Left ventricle myocardium inferior (tissue), 1 donor: ENCODE measurements at regions of chr3 and their contacts with region 1.

Region 1: DNA sequence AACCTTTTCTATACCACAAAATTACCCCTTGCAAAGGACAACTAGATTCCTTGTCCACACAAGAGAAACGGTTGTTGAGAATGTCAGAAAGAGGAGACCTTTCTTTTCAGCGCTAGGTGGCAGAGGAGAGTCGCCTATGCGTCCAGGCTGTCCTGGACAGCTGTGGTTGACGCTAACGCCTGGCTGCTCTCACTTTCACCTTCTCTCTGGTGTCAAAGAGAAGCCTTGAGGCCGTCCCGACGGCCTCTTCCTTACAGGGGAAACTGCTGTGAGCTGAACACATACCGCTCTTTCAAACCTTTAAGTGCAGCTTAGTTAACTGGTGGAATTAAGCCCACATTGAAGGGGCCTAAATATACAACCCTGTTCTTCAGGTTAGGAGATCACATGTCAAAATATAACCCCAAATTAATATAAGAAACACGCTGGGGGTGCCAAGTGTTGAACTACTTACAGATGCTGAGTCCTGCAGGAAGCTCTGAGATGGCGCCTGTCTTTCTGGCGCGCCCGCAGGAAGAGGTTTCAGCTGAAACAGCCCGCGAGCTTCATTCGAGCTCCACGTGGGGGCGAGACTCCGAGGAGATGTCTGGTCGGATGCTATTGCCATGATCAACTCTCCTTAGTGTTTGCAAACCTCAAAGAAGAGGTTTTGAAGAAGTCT is 26.1 kb upstream of the KBTBD8 start:
- DNase-seq: peak; percentile 52
- H3K4me3 ChIP-seq: peak overlapping the region; percentile 59
- H3K27ac ChIP-seq: peak overlapping the region; percentile 54
- H3K4me1 ChIP-seq: peaks cover 12% of the 10 kb centered on the region
- H3K27me3 ChIP-seq: peaks cover 14% of the 10 kb centered on the region
- CTCF ChIP-seq: peak; percentile 89

Region 2: DNA sequence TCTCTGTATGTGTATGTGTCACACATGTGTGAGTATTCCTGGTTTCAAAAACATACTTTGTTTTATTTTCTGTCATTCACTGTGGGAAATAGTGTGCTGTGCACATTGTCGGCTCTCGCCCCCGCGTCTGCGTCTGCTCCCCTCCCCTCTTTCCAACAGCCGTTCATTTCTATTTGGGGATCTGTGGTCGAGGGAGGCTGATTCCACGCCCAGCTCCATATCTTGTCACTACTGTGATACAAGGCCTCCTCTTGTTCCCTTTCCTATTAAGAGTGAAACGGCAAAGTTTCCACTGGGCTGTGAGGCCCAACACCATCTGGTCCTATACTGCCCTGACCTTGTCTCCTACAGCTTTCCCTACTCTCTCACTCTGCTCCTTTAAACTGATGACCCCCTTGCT is 298.7 kb before region 1 on chr3:
- intact Hi-C with region 1: no loop called
- DNase-seq: no peak
- H3K4me3 ChIP-seq: no peak overlapping the region
- H3K27ac ChIP-seq: no peak overlapping the region
- H3K4me1 ChIP-seq: peaks cover 23% of the 10 kb centered on the region
- H3K27me3 ChIP-seq: no peaks in the 10 kb centered on the region
- CTCF ChIP-seq: no peak

Region 3: GRCh38 chr3:67037615-67038014 is 65.6 kb after region 1 on chr3:
- intact Hi-C with region 1: loop called (anchors 5 kb)
- DNase-seq: no peak
- H3K4me3 ChIP-seq: no peak overlapping the region
- H3K27ac ChIP-seq: no peak overlapping the region
- H3K4me1 ChIP-seq: no peaks in the 10 kb centered on the region
- H3K27me3 ChIP-seq: no peaks in the 10 kb centered on the region
- CTCF ChIP-seq: peak; percentile 49

Region 4: DNA sequence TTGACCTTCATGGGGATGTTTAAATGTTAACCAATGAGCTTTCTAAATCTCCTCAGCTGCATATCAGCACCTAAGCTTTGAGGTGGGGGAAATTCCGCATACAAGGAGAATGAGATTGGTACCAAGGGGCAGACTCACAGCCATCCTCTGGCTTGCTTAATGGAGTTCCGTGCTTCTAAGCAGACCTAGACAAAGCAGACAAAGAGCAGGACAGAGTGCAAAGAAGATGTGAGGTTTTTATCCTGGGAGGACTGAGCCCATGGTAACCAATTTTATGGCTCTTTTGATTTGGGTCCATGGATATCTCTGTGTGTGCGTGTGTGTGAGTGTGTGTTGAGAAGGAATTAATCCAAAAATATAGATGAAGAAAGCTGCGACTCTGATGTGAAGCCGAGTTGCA is 1952.9 kb after region 1 on chr3:
- intact Hi-C with region 1: no loop called
- DNase-seq: no peak
- H3K4me3 ChIP-seq: no peak overlapping the region
- H3K27ac ChIP-seq: no peak overlapping the region
- H3K4me1 ChIP-seq: no peaks in the 10 kb centered on the region
- H3K27me3 ChIP-seq: peaks cover 73% of the 10 kb centered on the region
- CTCF ChIP-seq: no peak